Sigmoid colon (tissue), 7 donors: ENCODE measurements at regions of chr9 and their contacts with region 1.

Region 1: GRCh38 chr9:6667633-6668280 is 22.2 kb upstream of the GLDC start:
- DNase-seq: no peak
- H3K4me3 ChIP-seq: no peak overlapping the region
- H3K27ac ChIP-seq: no peak overlapping the region
- H3K4me1 ChIP-seq: no peaks in the 10 kb centered on the region
- H3K27me3 ChIP-seq: no peaks in the 10 kb centered on the region
- CTCF ChIP-seq: peak in 3 of 4 experiments; percentile 12 to 45 (median 16)
- EP300 ChIP-seq: no peak
- POLR2A ChIP-seq: no peak

Region 2: DNA sequence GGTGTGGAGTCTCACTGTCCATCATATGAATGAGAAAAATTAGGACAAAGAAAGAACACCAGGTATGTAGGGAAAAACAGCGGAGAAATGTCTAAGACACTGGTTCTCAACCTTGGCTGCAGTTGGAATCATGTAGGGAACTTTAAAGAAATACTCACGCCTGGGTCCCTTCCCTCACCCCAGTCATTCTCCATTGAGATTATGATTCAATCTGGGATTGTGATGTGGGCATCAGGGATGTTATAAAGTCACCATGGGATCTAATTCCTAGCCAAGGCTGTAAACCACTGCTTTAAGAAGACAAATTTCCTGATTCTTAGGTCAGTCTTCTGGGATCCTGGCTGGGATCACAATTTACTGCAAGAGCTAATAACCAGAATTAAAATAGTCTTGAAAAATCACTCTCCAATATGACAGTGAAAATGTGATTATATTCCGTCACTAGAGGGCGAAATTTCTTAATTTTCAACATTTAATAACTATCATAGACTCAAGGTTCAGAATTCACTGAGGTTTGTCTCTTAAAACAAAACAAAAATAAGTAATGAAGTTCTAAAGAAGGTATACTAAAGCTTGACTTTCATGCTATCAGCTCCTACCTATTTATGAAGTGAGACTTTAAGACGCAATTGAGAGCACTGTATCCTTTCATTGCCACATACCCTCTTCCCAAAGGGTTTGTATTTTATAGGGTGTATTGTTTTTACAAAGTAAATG is 82.7 kb before region 1 on chr9:
- intact Hi-C with region 1: loop called (anchors 10 kb)
- DNase-seq: no peak
- H3K4me3 ChIP-seq: no peak overlapping the region
- H3K27ac ChIP-seq: no peak overlapping the region
- H3K4me1 ChIP-seq: no peaks in the 10 kb centered on the region
- H3K27me3 ChIP-seq: no peaks in the 10 kb centered on the region
- CTCF ChIP-seq: peak in 3 of 4 experiments; percentile 15 to 46 (median 17)
- EP300 ChIP-seq: no peak
- POLR2A ChIP-seq: no peak

Region 3: GRCh38 chr9:6632516-6633183 is 35.1 kb before region 1 on chr9:
- intact Hi-C with region 1: no loop called
- DNase-seq: no peak
- H3K4me3 ChIP-seq: no peak overlapping the region
- H3K27ac ChIP-seq: no peak overlapping the region
- H3K4me1 ChIP-seq: no peaks in the 10 kb centered on the region
- H3K27me3 ChIP-seq: no peaks in the 10 kb centered on the region
- CTCF ChIP-seq: no peak
- EP300 ChIP-seq: no peak
- POLR2A ChIP-seq: no peak

Region 4: GRCh38 chr9:6739218-6739617 is 71.5 kb after region 1 on chr9:
- intact Hi-C with region 1: no loop called
- DNase-seq: no peak
- H3K4me3 ChIP-seq: no peak overlapping the region
- H3K27ac ChIP-seq: no peak overlapping the region
- H3K4me1 ChIP-seq: no peaks in the 10 kb centered on the region
- H3K27me3 ChIP-seq: no peaks in the 10 kb centered on the region
- CTCF ChIP-seq: peak in 1 of 4 experiments; percentile 14
- EP300 ChIP-seq: no peak
- POLR2A ChIP-seq: no peak

Region 5: GRCh38 chr9:6757456-6758247 is 89.9 kb after region 1 on chr9 and contains the start of gene KDM4C:
- intact Hi-C with region 1: no loop called
- DNase-seq: peak; percentile 98
- H3K4me3 ChIP-seq: peak within 1 kb of the TSS; percentile 74 to 99 (median 89)
- H3K27ac ChIP-seq: peak within 1 kb of the TSS; percentile 95 to 99 (median 98)
- H3K4me1 ChIP-seq: peaks cover 0 to 19% (median 10%) of the 10 kb centered on the region in 4 donors
- H3K27me3 ChIP-seq: no peaks in the 10 kb centered on the region
- CTCF ChIP-seq: no peak
- EP300 ChIP-seq: peak in 2 of 4 donors; percentile 36 to 64
- POLR2A ChIP-seq: peak; percentile 74 to 88
- total RNA-seq, gene KDM4C: 28.8 to 33.5 (median 29.8) TPM